Natural killer cell (primary cell): ENCODE measurements at regions of chr1 and their contacts with region 1.

Region 1: GRCh38 chr1:27662707-27663393 is 9.1 kb downstream of the IFI6 start:
- DNase-seq: peak; percentile 89 to 95
- ATAC-seq: peak; percentile 53 to 82 (median 54)
- H3K4me3 ChIP-seq: peak overlapping the region; percentile 5
- H3K4me3 Mint-ChIP-seq: peak overlapping the region; percentile 89
- H3K27ac ChIP-seq: peak overlapping the region; percentile 86
- H3K27ac Mint-ChIP-seq: peak overlapping the region; percentile 99 to 100
- H3K4me1 ChIP-seq: peaks cover 56% of the 10 kb centered on the region
- H3K4me1 Mint-ChIP-seq: peaks cover 50 to 59% of the 10 kb centered on the region in 2 donors
- H3K27me3 ChIP-seq: no peaks in the 10 kb centered on the region
- H3K27me3 Mint-ChIP-seq: no peaks in the 10 kb centered on the region
- CTCF ChIP-seq: peak; percentile 83

Region 2: DNA sequence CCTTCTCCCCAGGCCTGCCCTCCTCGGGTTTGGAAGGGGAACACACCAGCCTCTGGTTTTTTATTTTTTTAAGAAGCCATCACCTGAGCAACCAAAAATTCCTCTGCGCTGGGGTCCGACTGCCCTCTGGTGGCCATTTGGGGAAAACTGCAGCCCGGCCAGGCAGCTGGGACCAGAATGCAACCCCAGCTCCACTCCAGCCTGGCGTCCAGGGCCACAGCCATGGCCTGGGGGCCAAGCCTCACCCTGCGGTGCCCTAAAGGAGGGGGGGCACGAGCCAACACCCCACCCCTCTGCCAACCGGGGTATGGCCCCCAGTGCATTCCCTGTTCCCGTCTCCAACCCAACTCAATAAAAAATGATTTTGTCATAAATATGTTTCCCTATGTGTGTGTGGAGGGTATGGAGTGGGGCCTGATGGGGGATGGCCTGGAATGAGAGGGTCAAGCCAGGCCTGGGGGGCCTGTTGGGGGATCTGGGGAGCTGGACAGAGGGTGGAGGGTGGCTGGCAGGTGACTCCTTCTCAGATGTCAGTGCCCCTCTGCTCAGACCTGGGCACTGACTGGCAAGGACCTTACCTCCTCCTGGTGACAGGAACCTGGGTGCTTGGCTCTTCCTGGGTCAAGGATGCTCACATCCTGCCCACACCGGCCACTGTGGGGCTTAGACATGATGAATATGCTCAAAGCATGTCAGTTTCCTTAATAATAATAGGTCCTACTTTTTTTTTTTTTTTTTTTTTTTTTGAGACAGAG is 267.2 kb before region 1 on chr1:
- intact Hi-C with region 1: loop called (anchors 2 kb)
- DNase-seq: peak; percentile 76 to 90
- ATAC-seq: peak; percentile 31 to 61 (median 32)
- H3K4me3 ChIP-seq: no peak overlapping the region
- H3K4me3 Mint-ChIP-seq: peak overlapping the region; percentile 17
- H3K27ac ChIP-seq: no peak overlapping the region
- H3K27ac Mint-ChIP-seq: peak overlapping the region; percentile 36 to 98
- H3K4me1 ChIP-seq: peaks cover 23% of the 10 kb centered on the region
- H3K4me1 Mint-ChIP-seq: peaks cover 11 to 24% of the 10 kb centered on the region in 2 donors
- H3K27me3 ChIP-seq: no peaks in the 10 kb centered on the region
- H3K27me3 Mint-ChIP-seq: peaks cover 6 to 7% of the 10 kb centered on the region in 2 donors
- CTCF ChIP-seq: peak; percentile 92

Region 3: DNA sequence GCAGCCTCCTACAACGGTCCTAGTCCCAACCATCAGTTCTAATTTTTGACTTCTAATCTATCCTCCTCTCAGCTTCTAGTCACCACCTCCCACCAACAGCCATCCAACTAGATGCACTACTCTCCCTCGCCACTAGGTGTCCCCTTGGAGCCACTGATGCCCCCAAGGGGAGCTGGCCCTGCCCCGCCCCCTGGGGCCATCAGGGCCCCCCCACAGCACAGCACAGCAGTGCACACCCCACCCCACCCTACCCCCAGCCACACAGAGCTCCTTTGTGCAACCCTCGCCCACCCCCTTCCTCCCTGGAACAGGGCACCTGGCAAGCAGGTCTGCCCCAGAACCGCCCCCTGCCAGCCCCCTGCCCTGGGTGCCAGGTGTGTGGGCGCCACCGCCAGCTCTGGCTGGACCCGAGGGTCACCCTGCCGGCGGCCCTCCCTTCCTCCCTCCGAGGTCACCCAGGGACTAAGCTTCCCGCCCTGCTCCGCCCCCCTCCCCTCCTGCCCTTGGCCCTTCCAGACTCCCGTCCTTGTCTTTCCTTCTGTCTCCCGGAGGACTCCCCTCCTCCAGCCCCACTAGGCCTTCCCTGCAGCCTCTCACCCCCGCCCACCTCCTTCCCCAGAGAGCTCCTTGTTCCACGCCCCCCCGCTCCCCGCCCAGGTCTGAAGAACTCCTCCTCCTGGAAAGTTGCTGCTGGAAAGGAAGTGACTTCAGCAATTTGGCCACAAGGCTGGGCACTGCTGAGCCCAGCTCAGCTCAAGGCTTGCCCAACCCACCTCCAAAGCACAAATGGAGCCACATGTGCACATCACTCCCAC is 105.9 kb before region 1 on chr1:
- intact Hi-C with region 1: loop called (anchors 1 kb)
- DNase-seq: peak; percentile 73 to 87
- ATAC-seq: peak; percentile 85 to 92 (median 85)
- H3K4me3 ChIP-seq: no peak overlapping the region
- H3K4me3 Mint-ChIP-seq: peak overlapping the region; percentile 63
- H3K27ac ChIP-seq: no peak overlapping the region
- H3K27ac Mint-ChIP-seq: peak overlapping the region; percentile 77 to 83
- H3K4me1 ChIP-seq: peaks cover 43% of the 10 kb centered on the region
- H3K4me1 Mint-ChIP-seq: peaks cover 42 to 57% of the 10 kb centered on the region in 2 donors
- H3K27me3 ChIP-seq: no peaks in the 10 kb centered on the region
- H3K27me3 Mint-ChIP-seq: no peaks in the 10 kb centered on the region
- CTCF ChIP-seq: peak; percentile 95

Region 4: DNA sequence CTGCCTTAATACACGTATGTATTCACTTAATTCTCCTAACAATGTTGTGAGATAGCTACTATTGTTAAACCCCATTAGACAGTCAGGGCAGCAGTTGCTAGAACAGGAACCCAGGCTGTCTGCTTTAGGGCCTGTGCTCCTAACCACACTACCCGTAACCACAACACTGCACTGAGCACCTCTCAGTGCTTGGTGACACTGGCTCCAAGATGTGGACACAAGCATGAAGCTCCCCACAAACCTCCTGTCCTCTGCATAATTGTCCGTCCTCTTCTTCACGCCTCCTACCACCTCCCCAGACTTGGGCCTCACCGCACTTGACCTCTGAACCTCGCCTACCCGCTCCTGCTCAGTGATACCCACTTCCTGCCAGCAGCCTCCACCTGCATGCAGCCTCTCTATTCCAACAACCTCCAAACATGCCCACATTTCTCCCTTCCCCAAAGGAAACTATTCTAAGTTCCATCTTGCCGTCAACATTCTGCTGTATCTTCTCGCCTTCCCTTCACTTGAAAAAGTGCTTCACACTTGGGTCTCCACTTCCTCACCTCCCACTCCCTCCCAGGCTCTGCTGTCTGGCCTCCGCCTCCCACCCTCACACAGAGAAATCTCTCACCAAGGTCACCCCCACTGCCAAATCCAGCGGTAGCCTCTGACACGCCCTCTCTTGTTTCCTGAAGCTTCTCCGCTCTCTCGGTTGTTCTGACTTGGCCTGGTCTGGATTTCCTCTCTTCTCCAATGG is 44.3 kb before region 1 on chr1:
- intact Hi-C with region 1: loop called (anchors 2 kb)
- DNase-seq: peak in 1 of 2 donors; percentile 83
- ATAC-seq: peak; percentile 77 to 92 (median 89)
- H3K4me3 ChIP-seq: no peak overlapping the region
- H3K4me3 Mint-ChIP-seq: peak overlapping the region; percentile 74
- H3K27ac ChIP-seq: peak overlapping the region; percentile 86
- H3K27ac Mint-ChIP-seq: peak overlapping the region in 1 of 2 donors; percentile 82
- H3K4me1 ChIP-seq: peaks cover 94% of the 10 kb centered on the region
- H3K4me1 Mint-ChIP-seq: peaks cover 60 to 75% of the 10 kb centered on the region in 2 donors
- H3K27me3 ChIP-seq: no peaks in the 10 kb centered on the region
- H3K27me3 Mint-ChIP-seq: no peaks in the 10 kb centered on the region
- CTCF ChIP-seq: no peak

Region 5: GRCh38 chr1:27643701-27644625 is 18.9 kb before region 1 on chr1:
- intact Hi-C with region 1: loop called (anchors 1 kb)
- DNase-seq: peak; percentile 65 to 89
- ATAC-seq: peak; percentile 94 to 100 (median 100)
- H3K4me3 ChIP-seq: no peak overlapping the region
- H3K4me3 Mint-ChIP-seq: no peak overlapping the region
- H3K27ac ChIP-seq: peak overlapping the region; percentile 53
- H3K27ac Mint-ChIP-seq: peak overlapping the region; percentile 76 to 80
- H3K4me1 ChIP-seq: peaks cover 18% of the 10 kb centered on the region
- H3K4me1 Mint-ChIP-seq: peaks cover 13 to 28% of the 10 kb centered on the region in 2 donors
- H3K27me3 ChIP-seq: no peaks in the 10 kb centered on the region
- H3K27me3 Mint-ChIP-seq: no peaks in the 10 kb centered on the region
- CTCF ChIP-seq: peak; percentile 88

Region 6: GRCh38 chr1:28028873-28029654 is 366.2 kb after region 1 on chr1:
- intact Hi-C with region 1: no loop called
- DNase-seq: no peak
- ATAC-seq: peak in 2 of 3 donors; percentile 32 to 62
- H3K4me3 ChIP-seq: no peak overlapping the region
- H3K4me3 Mint-ChIP-seq: peak overlapping the region; percentile 25
- H3K27ac ChIP-seq: no peak overlapping the region
- H3K27ac Mint-ChIP-seq: peak overlapping the region; percentile 78 to 87
- H3K4me1 ChIP-seq: peaks cover 6% of the 10 kb centered on the region
- H3K4me1 Mint-ChIP-seq: peaks cover 22 to 26% of the 10 kb centered on the region in 2 donors
- H3K27me3 ChIP-seq: no peaks in the 10 kb centered on the region
- H3K27me3 Mint-ChIP-seq: no peaks in the 10 kb centered on the region
- CTCF ChIP-seq: no peak